ENCODE measurements at regions of chr9 and their contacts with region 1.

Region 1: DNA sequence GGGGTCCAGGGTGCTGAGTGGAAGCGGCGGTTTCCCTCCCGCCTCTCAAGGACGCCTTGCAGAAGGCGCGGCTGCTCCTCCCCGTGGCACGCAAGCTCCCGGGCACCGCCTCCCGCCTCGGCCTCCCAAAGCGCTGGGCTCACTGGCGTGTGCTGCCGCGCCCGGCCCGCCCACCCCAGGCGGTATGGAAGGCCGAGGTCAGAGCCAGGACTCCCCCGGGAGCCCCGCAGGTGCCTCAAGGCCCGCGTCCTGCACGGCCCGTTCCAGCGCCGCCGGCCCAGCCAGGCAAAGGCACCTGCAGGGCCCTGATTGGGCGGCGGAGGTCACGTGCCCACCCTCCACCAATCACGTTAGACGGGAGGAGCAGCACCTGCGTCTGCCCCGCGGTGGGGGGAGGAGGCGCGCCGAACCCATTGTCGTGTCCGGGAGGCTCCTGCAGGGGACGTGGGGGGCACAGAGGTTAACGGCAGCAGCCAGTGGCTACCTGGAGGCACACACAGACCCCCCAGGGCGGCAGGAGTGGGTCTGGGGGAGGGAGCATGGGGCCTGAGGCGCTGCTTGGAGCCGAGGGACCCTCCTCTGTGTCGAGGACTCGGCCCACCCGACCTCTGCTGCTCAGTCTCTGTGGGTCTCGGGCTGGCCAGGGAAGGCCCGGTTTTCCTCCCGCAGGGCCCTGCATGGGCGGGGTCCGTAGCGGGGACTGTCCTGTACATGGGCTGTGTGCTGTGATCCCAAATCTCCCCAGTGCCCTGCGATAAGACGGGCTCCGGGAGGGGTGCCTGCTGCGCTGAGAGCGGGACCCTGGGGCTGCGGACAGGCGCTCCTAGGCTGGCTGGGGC is 2.0 kb upstream of the LCN12 start:
- DNase-seq: peak; percentile 96 to 99 (median 98)
- ATAC-seq: peak; percentile 92 to 95 (median 94)
- H3K4me3 ChIP-seq: peak overlapping the region; percentile 58 to 71 (median 66)
- H3K27ac ChIP-seq: peak overlapping the region; percentile 93 to 94 (median 94)
- H3K4me1 ChIP-seq: peaks cover 0 to 18% (median 0%) of the 10 kb centered on the region in 3 donors
- H3K27me3 ChIP-seq: no peaks in the 10 kb centered on the region
- CTCF ChIP-seq: peak in 1 of 4 donors; percentile 15

Region 2: GRCh38 chr9:137029058-137029936 is 79.3 kb after region 1 on chr9:
- intact Hi-C with region 1: loop called in 1 of 3 experiments (anchors 10 kb)
- DNase-seq: peak in 5 of 6 donors; percentile 66 to 92 (median 79)
- ATAC-seq: peak; percentile 59 to 76 (median 70)
- H3K4me3 ChIP-seq: peak overlapping the region in 3 of 4 donors; percentile 49 to 68 (median 64)
- H3K27ac ChIP-seq: no peak overlapping the region
- H3K4me1 ChIP-seq: peaks cover 15 to 21% (median 17%) of the 10 kb centered on the region in 3 donors
- H3K27me3 ChIP-seq: no peaks in the 10 kb centered on the region
- CTCF ChIP-seq: peak; percentile 78 to 91 (median 88)

Measured in pancreas (tissue), 10 donors.